ENCODE measurements at regions of chr6 and their contacts with region 1.

Region 1: GRCh38 chr6:138588805-138589434 is 89.6 kb upstream of the NHSL1 start:
- DNase-seq: peak in 8 of 9 donors; percentile 14 to 60 (median 46)
- ATAC-seq: peak; percentile 69
- H3K4me3 ChIP-seq: no peak overlapping the region
- H3K4me3 Mint-ChIP-seq: no peak overlapping the region
- H3K27ac ChIP-seq: no peak overlapping the region
- H3K27ac Mint-ChIP-seq: no peak overlapping the region
- H3K4me1 ChIP-seq: peaks cover 0 to 11% of the 10 kb centered on the region in 2 donors
- H3K4me1 Mint-ChIP-seq: peaks cover 12 to 29% (median 17%) of the 10 kb centered on the region in 7 donors
- H3K27me3 ChIP-seq: no peaks in the 10 kb centered on the region
- H3K27me3 Mint-ChIP-seq: peaks cover 0 to 3% (median 0%) of the 10 kb centered on the region in 5 donors

Region 2: DNA sequence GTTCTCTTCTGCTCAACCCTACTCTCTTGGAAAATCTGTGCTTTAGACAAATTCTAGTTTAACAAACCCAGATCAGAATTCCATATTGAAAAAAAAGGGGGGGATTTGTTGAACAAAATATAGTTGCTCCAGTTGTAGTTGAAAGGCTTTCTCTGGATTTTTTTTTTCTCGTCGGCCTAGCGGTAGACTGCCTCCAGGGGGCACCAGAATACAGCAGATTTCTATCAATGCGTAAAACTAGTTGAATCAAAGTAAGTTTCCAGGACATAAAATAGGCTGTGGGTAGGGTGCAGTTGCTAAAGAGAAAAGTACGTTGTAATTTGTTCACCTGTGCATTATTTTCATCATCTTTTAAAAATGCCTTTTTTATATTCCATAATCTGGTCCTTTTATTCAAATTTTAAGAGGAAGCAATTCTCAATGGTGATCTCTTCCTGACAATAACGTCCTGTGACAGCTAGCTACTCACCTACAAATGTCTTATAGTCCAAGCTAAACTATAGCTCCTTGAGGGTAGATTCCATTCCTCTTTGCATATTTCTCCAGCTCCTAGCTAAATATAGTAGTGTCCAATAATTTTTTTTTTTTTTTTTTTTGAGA is 587.1 kb before region 1 on chr6:
- CTCF ChIA-PET with region 1: no interaction called
- POLR2A ChIA-PET with region 1: no interaction called
- intact Hi-C with region 1: loop called in 1 of 2 experiments (anchors 5 kb)
- DNase-seq: peak in 8 of 9 donors; percentile 37 to 65 (median 56)
- ATAC-seq: peak; percentile 79
- H3K4me3 ChIP-seq: no peak overlapping the region
- H3K4me3 Mint-ChIP-seq: no peak overlapping the region
- H3K27ac ChIP-seq: no peak overlapping the region
- H3K27ac Mint-ChIP-seq: peak overlapping the region in 1 of 9 donors; percentile 27
- H3K4me1 ChIP-seq: no peaks in the 10 kb centered on the region
- H3K4me1 Mint-ChIP-seq: peaks cover 0 to 16% (median 5%) of the 10 kb centered on the region in 7 donors
- H3K27me3 ChIP-seq: no peaks in the 10 kb centered on the region
- H3K27me3 Mint-ChIP-seq: peaks cover 0 to 11% (median 0%) of the 10 kb centered on the region in 5 donors

Region 3: DNA sequence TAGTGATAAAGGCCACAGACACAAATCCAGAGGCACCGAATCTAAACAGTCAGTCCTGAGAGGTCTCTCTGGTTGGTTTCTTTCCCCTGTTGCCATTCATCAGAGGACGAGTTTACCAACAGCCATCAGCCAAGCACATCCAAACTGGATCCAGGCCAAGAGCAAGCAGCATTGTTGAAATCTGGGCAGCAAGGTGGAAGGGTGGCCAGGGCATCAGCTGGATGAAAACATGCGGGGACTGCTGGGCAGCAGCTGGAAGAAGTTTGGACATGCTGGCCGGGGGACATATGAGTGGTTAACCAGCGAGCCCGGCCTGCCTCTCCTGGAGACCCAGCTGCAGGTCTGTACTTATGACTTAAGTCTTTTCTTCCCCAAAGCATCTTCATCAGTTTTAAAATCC is 211.1 kb before region 1 on chr6 and contains the start of gene SMIM28:
- CTCF ChIA-PET with region 1: no interaction called
- POLR2A ChIA-PET with region 1: no interaction called
- intact Hi-C with region 1: no loop called
- DNase-seq: no peak
- ATAC-seq: no peak
- H3K4me3 ChIP-seq: no peak within 1 kb of the TSS
- H3K4me3 Mint-ChIP-seq: no peak within 1 kb of the TSS
- H3K27ac ChIP-seq: no peak within 1 kb of the TSS
- H3K27ac Mint-ChIP-seq: no peak within 1 kb of the TSS
- H3K4me1 ChIP-seq: no peaks in the 10 kb centered on the region
- H3K4me1 Mint-ChIP-seq: no peaks in the 10 kb centered on the region
- H3K27me3 ChIP-seq: no peaks in the 10 kb centered on the region
- H3K27me3 Mint-ChIP-seq: peaks cover 0 to 12% (median 0%) of the 10 kb centered on the region in 5 donors
- total RNA-seq, gene SMIM28: not detected

Region 4: GRCh38 chr6:138692058-138692977 is 103.4 kb after region 1 on chr6:
- CTCF ChIA-PET with region 1: no interaction called
- POLR2A ChIA-PET with region 1: no interaction called
- intact Hi-C with region 1: loop called (anchors 2 kb)
- DNase-seq: peak; percentile 20 to 74 (median 37)
- ATAC-seq: peak; percentile 80
- H3K4me3 ChIP-seq: peak overlapping the region; percentile 22
- H3K4me3 Mint-ChIP-seq: peak overlapping the region; percentile 53 to 88 (median 86)
- H3K27ac ChIP-seq: no peak overlapping the region
- H3K27ac Mint-ChIP-seq: peak overlapping the region in 2 of 9 donors; percentile 49 to 77
- H3K4me1 ChIP-seq: peaks cover 0 to 3% of the 10 kb centered on the region in 2 donors
- H3K4me1 Mint-ChIP-seq: peaks cover 0 to 13% (median 9%) of the 10 kb centered on the region in 7 donors
- H3K27me3 ChIP-seq: peaks cover 0 to 6% of the 10 kb centered on the region in 2 donors
- H3K27me3 Mint-ChIP-seq: peaks cover 23 to 56% (median 46%) of the 10 kb centered on the region in 5 donors

Region 5: GRCh38 chr6:138765896-138766655 is 177.2 kb after region 1 on chr6:
- CTCF ChIA-PET with region 1: interaction called, 21 read pairs
- POLR2A ChIA-PET with region 1: no interaction called
- intact Hi-C with region 1: loop called (anchors 1 kb)
- DNase-seq: peak in 5 of 9 donors; percentile 25 to 42 (median 29)
- ATAC-seq: no peak
- H3K4me3 ChIP-seq: no peak overlapping the region
- H3K4me3 Mint-ChIP-seq: no peak overlapping the region
- H3K27ac ChIP-seq: no peak overlapping the region
- H3K27ac Mint-ChIP-seq: peak overlapping the region in 1 of 9 donors; percentile 26
- H3K4me1 ChIP-seq: no peaks in the 10 kb centered on the region
- H3K4me1 Mint-ChIP-seq: peaks cover 0 to 5% (median 0%) of the 10 kb centered on the region in 7 donors
- H3K27me3 ChIP-seq: no peaks in the 10 kb centered on the region
- H3K27me3 Mint-ChIP-seq: no peaks in the 10 kb centered on the region

Region 6: DNA sequence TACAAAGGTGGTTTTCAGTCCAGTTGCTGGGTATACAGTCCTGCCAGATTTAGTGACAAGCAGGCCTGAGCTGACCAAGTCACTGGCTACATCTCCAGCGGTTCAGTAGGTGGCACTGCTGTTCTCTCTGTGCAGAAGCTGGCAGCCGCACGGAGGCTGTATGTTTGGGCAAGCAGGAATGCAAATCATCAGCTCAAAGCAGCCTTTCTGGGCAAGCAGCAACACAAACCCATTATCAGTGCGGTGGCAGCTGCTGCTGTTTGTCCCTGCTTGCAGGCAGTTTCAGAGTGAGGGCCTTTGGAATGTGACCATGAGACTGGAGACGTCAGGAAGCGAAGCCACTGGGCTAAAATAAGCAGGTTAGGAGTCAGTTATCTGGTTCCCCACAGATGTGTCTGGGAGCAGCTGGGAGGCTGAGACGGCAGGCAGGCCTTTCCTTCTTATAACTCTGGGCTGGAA is 630.4 kb after region 1 on chr6:
- CTCF ChIA-PET with region 1: no interaction called
- POLR2A ChIA-PET with region 1: no interaction called
- intact Hi-C with region 1: loop called in 1 of 2 experiments (anchors 10 kb)
- DNase-seq: peak; percentile 39 to 76 (median 60)
- ATAC-seq: peak; percentile 100
- H3K4me3 ChIP-seq: no peak overlapping the region
- H3K4me3 Mint-ChIP-seq: peak overlapping the region in 8 of 10 donors; percentile 41 to 68 (median 58)
- H3K27ac ChIP-seq: no peak overlapping the region
- H3K27ac Mint-ChIP-seq: peak overlapping the region; percentile 49 to 92 (median 78)
- H3K4me1 ChIP-seq: peaks cover 5 to 10% of the 10 kb centered on the region in 2 donors
- H3K4me1 Mint-ChIP-seq: peaks cover 6 to 20% (median 12%) of the 10 kb centered on the region in 7 donors
- H3K27me3 ChIP-seq: no peaks in the 10 kb centered on the region
- H3K27me3 Mint-ChIP-seq: no peaks in the 10 kb centered on the region

Region 7: DNA sequence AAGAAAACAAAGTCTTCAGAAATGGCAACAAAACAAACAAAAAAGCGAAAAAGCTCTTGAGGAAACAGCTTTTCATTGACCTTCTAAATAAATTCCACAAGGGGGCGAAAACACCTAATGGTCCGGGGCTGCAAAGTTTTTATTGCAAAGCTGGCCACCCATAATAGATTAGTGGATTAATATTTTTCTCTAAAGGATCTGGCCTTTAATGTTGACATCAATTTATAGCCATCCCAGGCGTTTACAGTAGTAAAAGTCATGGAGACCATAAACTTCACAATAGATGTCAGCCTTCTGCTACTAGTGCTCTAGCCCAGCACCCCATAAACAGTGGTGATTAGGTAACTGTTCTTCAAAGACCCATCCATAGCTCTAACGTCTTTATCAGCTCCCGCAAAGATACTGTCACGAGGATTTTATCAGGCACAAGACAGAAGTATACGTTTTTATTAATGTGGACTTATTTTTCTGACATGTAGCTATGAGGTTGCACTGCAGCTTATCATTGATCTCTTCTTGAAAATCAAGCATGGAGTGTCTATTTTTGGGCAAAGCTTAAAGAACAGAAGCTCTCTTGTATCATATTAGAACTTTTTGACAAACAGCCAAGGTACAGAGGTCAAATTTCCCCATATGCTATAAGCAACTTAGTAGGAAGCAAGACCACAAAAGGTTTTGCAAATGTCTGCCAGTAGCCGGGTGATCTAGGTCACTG is 780.8 kb after region 1 on chr6:
- CTCF ChIA-PET with region 1: interaction called, 3 read pairs
- POLR2A ChIA-PET with region 1: no interaction called
- intact Hi-C with region 1: loop called in 1 of 2 experiments (anchors 5 kb)
- DNase-seq: peak in 6 of 9 donors; percentile 16 to 49 (median 41)
- ATAC-seq: no peak
- H3K4me3 ChIP-seq: peak overlapping the region; percentile 3
- H3K4me3 Mint-ChIP-seq: peak overlapping the region; percentile 13 to 100 (median 96)
- H3K27ac ChIP-seq: peak overlapping the region; percentile 82
- H3K27ac Mint-ChIP-seq: peak overlapping the region; percentile 60 to 100 (median 98)
- H3K4me1 ChIP-seq: peaks cover 25 to 39% of the 10 kb centered on the region in 2 donors
- H3K4me1 Mint-ChIP-seq: peaks cover 25 to 53% (median 50%) of the 10 kb centered on the region in 7 donors
- H3K27me3 ChIP-seq: no peaks in the 10 kb centered on the region
- H3K27me3 Mint-ChIP-seq: peaks cover 0 to 2% (median 0%) of the 10 kb centered on the region in 5 donors

Measured in naive thymus-derived CD4-positive, alpha-beta T cell (primary cell).